ENCODE measurements at regions of chr11 and their contacts with region 1.

Region 1: GRCh38 chr11:95778699-95779098 is 10.9 kb downstream of the FAM76B start:
- DNase-seq: no peak
- ATAC-seq: no peak
- H3K4me3 ChIP-seq: no peak overlapping the region
- H3K27ac ChIP-seq: no peak overlapping the region
- H3K4me1 ChIP-seq: no peaks in the 10 kb centered on the region
- H3K27me3 ChIP-seq: no peaks in the 10 kb centered on the region
- CTCF ChIP-seq: no peak
- POLR2A ChIP-seq: no peak

Region 2: DNA sequence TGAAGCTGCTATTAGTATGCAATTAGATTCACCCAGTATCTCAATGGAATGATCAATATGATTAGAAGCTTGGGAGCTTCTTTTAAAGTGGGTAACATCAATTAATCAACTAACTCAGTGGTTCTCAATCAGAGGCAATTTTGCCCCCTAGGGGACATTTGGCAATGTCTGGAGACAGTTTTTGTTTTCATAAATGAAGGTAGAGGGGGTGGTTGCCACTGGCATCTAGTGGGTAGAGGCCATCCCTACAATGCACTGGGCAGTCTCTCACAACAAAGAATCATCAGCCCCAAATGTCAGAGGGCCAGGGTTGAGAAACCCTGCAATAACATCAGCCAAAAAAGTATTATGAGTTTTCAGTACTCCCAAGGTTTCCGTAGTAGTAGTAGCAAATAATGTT is 1016.5 kb before region 1 on chr11:
- intact Hi-C with region 1: no loop called
- DNase-seq: no peak
- ATAC-seq: peak in 1 of 4 donors; percentile 49
- H3K4me3 ChIP-seq: no peak overlapping the region
- H3K27ac ChIP-seq: peak overlapping the region in 1 of 12 donors; percentile 13
- H3K4me1 ChIP-seq: peaks cover 0 to 4% (median 0%) of the 10 kb centered on the region in 12 donors
- H3K27me3 ChIP-seq: no peaks in the 10 kb centered on the region
- CTCF ChIP-seq: peak in 11 of 12 donors; percentile 26 to 60 (median 42)
- POLR2A ChIP-seq: no peak

Region 3: DNA sequence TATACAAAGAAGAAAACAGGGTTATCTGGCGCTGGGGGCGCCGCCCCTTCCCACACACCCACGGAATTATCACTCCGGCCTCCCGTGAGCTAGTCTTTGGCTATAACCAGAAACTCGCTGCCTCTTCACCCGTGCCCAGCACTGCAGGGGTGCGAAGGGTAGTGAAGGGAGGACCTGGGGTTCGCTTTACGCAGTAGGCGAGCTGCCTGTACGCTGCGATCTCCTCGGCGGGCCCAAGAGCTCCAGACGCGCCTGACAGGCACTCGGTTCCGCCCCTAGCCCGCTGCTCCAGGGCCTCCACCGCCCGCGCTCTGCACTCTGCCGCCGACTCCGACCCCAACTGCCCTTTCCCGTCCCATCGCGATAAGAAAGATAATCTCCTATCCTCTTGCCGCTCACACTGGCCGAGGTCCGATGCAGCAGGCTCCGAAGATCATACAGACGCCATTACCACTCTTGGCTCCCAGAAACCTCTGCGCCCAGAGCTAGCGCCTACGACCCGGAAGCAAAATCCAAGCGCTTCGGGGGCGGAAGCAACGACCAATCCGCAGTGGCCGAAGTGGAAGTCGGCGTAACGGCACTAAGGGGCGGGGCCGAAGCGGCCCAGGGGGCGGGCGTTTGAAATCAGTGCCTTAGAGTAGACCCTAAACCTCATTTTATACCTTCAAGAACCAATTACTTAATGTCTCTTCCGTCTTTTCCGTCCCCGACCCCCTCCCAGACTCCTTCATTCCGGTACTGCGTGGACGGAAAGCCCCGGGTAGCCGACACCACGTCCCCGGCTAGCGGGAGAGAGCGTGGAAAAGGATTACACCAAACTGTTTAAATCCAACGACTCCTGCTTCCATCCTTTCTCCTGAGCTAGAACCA is 805.4 kb before region 1 on chr11 and contains the starts of genes CWC15 and KDM4D:
- intact Hi-C with region 1: loop called in 1 of 10 experiments (anchors 10 kb)
- DNase-seq: peak; percentile 96
- ATAC-seq: peak; percentile 99 to 100 (median 100)
- H3K4me3 ChIP-seq: peak within 1 kb of the TSS; percentile 71 to 93 (median 87)
- H3K27ac ChIP-seq: peak within 1 kb of the TSS in 11 of 12 donors; percentile 57 to 89 (median 80)
- H3K4me1 ChIP-seq: peaks cover 4 to 19% (median 12%) of the 10 kb centered on the region in 12 donors
- H3K27me3 ChIP-seq: no peaks in the 10 kb centered on the region
- CTCF ChIP-seq: peak in 1 of 12 donors; percentile 15
- POLR2A ChIP-seq: no peak
- total RNA-seq, gene CWC15: 54.4 to 81.8 (median 62.6) TPM
- total RNA-seq, gene KDM4D: 0.65 to 1.3 (median 0.95) TPM in 8 of 9 donors, not detected in the other